Ascending aorta (tissue), 2 donors: ENCODE measurements at regions of chr2 and their contacts with region 1.

Region 1: GRCh38 chr2:181848261-181848886 is 43.2 kb upstream of the ITPRID2 start:
- DNase-seq: no peak
- H3K4me3 ChIP-seq: no peak overlapping the region
- H3K27ac ChIP-seq: no peak overlapping the region
- H3K4me1 ChIP-seq: no peaks in the 10 kb centered on the region
- H3K27me3 ChIP-seq: no peaks in the 10 kb centered on the region
- CTCF ChIP-seq: no peak

Region 2: DNA sequence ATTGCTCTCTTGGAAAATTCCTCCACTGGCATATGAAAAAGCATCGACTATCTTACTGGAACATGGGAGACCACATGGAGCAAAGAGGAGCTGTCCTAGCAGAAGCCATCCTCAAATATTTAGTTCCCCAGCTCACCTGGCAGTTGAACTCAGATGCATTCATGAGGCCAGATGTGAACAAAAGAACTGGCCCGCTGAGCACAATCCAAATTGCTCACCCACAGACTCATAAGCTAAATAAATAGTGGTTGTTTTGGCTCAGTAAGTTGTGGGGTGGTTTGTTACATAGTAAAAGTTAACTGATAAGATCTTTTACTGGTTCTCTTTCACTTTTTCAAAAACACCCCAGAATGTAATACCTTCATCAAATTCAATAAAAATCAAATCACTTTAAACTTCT is 1732.7 kb before region 1 on chr2:
- intact Hi-C with region 1: no loop called
- DNase-seq: no peak
- H3K4me3 ChIP-seq: no peak overlapping the region
- H3K27ac ChIP-seq: no peak overlapping the region
- H3K4me1 ChIP-seq: no peaks in the 10 kb centered on the region
- H3K27me3 ChIP-seq: no peaks in the 10 kb centered on the region
- CTCF ChIP-seq: no peak

Region 3: DNA sequence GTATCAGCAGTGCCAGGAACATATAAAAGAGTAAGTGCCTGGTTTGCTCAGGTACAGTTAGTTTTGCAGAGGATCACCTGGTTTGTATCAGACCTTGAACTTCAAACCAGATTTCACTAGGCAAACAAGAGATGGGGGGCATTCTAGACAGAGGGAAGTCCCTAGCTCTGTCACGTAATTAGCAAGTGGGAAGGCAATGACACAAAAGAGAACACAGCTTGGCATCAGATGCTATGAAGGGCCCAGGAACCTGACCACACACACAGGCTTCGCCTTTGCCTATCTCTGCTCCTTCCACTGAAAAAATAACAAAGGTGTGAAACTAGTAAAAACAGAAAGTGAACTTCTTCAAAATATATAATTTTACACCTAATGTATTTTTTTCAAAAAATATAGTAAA is 254.1 kb before region 1 on chr2:
- intact Hi-C with region 1: no loop called
- DNase-seq: no peak
- H3K4me3 ChIP-seq: no peak overlapping the region
- H3K27ac ChIP-seq: no peak overlapping the region
- H3K4me1 ChIP-seq: no peaks in the 10 kb centered on the region
- H3K27me3 ChIP-seq: no peaks in the 10 kb centered on the region
- CTCF ChIP-seq: no peak

Region 4: DNA sequence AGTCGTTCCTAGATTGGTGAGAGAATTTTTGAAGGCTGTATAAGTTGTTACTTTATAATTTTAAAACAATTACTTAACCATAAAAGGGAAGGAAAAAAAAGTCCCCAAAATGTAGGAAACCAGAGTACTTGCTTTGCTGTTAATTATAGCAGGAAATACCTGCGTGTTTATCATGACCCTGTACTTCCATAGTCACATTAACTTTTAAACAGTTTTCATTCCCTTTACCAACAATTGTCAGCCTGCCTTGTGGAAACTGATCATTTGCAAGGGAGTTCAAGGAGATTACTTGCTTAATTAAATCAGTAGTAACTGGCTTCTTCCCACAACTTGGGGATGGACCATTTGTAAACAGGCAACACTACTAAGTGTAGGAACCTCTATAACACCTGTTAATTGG is 36.7 kb after region 1 on chr2:
- intact Hi-C with region 1: loop called (anchors 1 kb)
- DNase-seq: no peak
- H3K4me3 ChIP-seq: no peak overlapping the region
- H3K27ac ChIP-seq: no peak overlapping the region
- H3K4me1 ChIP-seq: peaks cover 0 to 5% of the 10 kb centered on the region in 2 donors
- H3K27me3 ChIP-seq: no peaks in the 10 kb centered on the region
- CTCF ChIP-seq: no peak

Region 5: GRCh38 chr2:181916726-181917718 is 68.6 kb after region 1 on chr2:
- intact Hi-C with region 1: no loop called
- DNase-seq: no peak
- H3K4me3 ChIP-seq: no peak overlapping the region
- H3K27ac ChIP-seq: no peak overlapping the region
- H3K4me1 ChIP-seq: no peaks in the 10 kb centered on the region
- H3K27me3 ChIP-seq: no peaks in the 10 kb centered on the region
- CTCF ChIP-seq: no peak